ENCODE measurements at regions of chr15 and their contacts with region 1.

Region 1: DNA sequence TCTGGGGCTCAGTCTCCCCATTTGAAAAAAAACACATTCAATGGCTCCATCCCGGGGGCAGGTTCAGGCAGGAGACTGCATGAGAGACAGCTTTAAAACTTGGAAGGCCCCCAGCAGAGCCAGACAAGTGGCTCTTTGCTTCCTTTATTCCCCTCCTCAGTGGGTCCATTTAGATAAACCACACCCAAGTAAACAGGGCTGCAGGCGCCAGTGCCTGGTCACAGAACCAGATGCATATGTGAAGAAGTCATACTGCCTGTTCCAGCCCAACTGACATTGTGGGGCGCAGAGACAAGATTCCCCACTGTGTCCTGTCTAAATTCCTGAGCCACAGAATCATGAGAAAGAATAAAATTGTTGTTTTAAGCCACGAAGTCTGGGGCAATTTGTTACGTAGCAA is 9.0 kb downstream of the FBN1 start:
- DNase-seq: no peak
- ATAC-seq: no peak
- H3K4me3 ChIP-seq: no peak overlapping the region
- H3K27ac ChIP-seq: no peak overlapping the region
- H3K4me1 ChIP-seq: no peaks in the 10 kb centered on the region
- H3K27me3 ChIP-seq: no peaks in the 10 kb centered on the region
- CTCF ChIP-seq: no peak

Region 2: DNA sequence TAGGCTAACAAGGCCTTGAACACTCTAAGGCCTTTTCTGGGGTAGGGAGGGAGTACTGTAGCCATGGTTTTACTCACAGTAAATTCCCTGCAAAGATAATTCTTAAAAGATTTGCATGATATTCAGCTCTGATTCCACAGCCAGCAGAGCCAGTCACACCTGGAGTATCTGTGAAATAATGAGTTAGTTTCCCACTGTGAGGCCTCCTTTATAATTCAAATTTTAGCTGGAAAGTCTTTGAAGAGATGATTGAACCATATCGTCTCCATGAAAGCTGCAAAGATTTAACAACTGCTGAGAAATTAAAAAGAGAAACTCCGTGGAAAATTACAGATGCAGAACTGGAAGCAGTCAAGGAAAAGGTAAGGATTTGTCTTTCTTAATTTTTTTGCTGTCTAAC is 337.6 kb before region 1 on chr15:
- intact Hi-C with region 1: no loop called
- DNase-seq: no peak
- ATAC-seq: no peak
- H3K4me3 ChIP-seq: no peak overlapping the region
- H3K27ac ChIP-seq: no peak overlapping the region
- H3K4me1 ChIP-seq: no peaks in the 10 kb centered on the region
- H3K27me3 ChIP-seq: no peaks in the 10 kb centered on the region
- CTCF ChIP-seq: no peak

Region 3: GRCh38 chr15:48360841-48361240 is 275.7 kb before region 1 on chr15:
- intact Hi-C with region 1: loop called in 1 of 2 experiments (anchors 5 kb)
- DNase-seq: no peak
- ATAC-seq: no peak
- H3K4me3 ChIP-seq: no peak overlapping the region
- H3K27ac ChIP-seq: no peak overlapping the region
- H3K4me1 ChIP-seq: peaks cover 0 to 9% of the 10 kb centered on the region in 2 donors
- H3K27me3 ChIP-seq: no peaks in the 10 kb centered on the region
- CTCF ChIP-seq: no peak